ENCODE measurements at regions of chr21 and their contacts with region 1.

Region 1: DNA sequence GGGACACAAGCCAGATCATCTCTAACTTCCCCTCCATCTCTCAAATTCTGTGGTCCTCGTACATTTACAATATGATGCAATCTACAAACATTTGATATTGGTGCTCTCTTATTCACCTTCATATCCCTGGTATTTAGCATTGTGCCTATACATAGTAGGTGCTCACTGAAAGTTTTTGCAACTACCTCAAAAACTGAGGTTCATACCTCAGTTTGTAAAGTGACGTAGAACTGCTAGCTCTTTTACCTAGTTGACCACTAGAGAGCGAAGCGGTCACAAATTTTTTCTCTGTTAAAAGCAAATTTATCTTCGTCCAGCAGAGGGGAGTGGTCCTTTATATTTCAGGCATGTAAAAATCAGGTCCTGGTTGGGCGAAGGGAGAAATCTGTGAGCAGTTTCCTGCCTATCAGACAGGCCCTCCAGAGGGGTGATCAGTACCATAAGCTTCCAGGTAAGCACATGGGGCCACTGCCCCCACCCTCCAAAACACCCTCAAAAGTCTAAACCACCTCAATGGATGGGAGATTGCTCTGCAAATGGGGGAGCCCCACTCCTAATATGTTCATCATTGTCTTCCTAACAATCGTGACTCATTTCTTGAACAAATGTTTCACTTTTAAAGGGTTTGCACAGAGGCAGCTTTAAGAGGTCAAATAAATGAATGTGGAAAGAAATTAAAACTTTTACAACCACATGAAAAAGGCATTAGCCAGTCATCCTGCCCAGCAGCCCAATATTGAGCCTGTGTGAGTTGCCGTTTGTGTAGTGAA is 10.6 kb upstream of the HLCS start:
- DNase-seq: peak; percentile 3 to 62 (median 35)
- H3K4me3 ChIP-seq: no peak overlapping the region
- H3K4me3 Mint-ChIP-seq: peak overlapping the region in 4 of 7 donors; percentile 1 to 63 (median 38)
- H3K27ac ChIP-seq: no peak overlapping the region
- H3K27ac Mint-ChIP-seq: peak overlapping the region in 4 of 8 donors; percentile 71 to 86 (median 78)
- H3K4me1 ChIP-seq: no peaks in the 10 kb centered on the region
- H3K4me1 Mint-ChIP-seq: peaks cover 15 to 24% (median 20%) of the 10 kb centered on the region in 3 donors
- H3K27me3 ChIP-seq: no peaks in the 10 kb centered on the region
- H3K27me3 Mint-ChIP-seq: no peaks in the 10 kb centered on the region

Region 2: DNA sequence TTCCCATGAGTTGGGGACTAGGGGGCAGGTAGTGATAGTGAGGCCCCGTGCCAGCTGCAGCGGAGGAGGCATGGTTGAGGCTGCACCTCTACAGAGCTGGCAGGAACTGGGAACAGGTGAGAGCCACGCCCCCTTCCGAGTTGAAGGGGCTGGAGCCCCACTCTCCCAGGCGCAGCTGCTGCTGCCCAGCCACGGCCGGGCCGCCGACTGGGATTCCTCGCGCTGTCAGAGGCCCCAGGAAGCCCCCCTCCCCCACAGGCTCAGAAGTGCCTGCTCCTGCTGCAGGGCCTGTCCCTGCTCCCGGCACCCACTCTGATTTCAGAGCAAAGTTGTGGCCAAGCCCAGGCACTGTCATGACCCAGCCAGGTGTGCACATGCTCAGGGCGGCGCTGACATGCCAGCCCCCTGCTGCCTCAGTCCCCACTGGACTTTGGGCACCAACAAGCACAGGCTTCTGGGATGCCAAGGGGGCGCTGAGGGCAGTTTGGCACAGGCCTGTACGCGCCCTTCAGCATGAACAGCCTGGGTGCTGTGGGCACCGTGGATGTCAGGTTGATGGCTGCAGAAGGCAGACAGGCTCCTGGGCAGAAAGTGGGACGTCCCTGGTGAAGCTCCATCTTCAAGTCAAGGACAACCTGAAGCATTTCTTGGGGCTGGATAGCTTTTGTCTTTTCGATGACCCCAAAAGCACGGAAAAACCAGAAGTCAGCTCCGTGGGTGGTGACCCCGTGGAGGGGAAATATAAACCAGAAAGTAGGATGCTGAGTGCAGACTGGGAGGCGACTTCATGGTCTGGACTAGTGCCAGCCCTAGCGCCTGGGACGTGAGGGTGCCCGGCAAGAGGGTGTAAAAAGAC is 156.7 kb before region 1 on chr21:
- CTCF ChIA-PET with region 1: no interaction called
- POLR2A ChIA-PET with region 1: no interaction called
- DNase-seq: no peak
- H3K4me3 ChIP-seq: no peak overlapping the region
- H3K4me3 Mint-ChIP-seq: no peak overlapping the region
- H3K27ac ChIP-seq: no peak overlapping the region
- H3K27ac Mint-ChIP-seq: peak overlapping the region in 1 of 8 donors; percentile 47
- H3K4me1 ChIP-seq: no peaks in the 10 kb centered on the region
- H3K4me1 Mint-ChIP-seq: no peaks in the 10 kb centered on the region
- H3K27me3 ChIP-seq: no peaks in the 10 kb centered on the region
- H3K27me3 Mint-ChIP-seq: no peaks in the 10 kb centered on the region

Region 3: GRCh38 chr21:36948686-36949085 is 28.4 kb before region 1 on chr21:
- CTCF ChIA-PET with region 1: no interaction called
- POLR2A ChIA-PET with region 1: no interaction called
- DNase-seq: no peak
- H3K4me3 ChIP-seq: no peak overlapping the region
- H3K4me3 Mint-ChIP-seq: no peak overlapping the region
- H3K27ac ChIP-seq: no peak overlapping the region
- H3K27ac Mint-ChIP-seq: no peak overlapping the region
- H3K4me1 ChIP-seq: no peaks in the 10 kb centered on the region
- H3K4me1 Mint-ChIP-seq: no peaks in the 10 kb centered on the region
- H3K27me3 ChIP-seq: no peaks in the 10 kb centered on the region
- H3K27me3 Mint-ChIP-seq: no peaks in the 10 kb centered on the region

Region 4: DNA sequence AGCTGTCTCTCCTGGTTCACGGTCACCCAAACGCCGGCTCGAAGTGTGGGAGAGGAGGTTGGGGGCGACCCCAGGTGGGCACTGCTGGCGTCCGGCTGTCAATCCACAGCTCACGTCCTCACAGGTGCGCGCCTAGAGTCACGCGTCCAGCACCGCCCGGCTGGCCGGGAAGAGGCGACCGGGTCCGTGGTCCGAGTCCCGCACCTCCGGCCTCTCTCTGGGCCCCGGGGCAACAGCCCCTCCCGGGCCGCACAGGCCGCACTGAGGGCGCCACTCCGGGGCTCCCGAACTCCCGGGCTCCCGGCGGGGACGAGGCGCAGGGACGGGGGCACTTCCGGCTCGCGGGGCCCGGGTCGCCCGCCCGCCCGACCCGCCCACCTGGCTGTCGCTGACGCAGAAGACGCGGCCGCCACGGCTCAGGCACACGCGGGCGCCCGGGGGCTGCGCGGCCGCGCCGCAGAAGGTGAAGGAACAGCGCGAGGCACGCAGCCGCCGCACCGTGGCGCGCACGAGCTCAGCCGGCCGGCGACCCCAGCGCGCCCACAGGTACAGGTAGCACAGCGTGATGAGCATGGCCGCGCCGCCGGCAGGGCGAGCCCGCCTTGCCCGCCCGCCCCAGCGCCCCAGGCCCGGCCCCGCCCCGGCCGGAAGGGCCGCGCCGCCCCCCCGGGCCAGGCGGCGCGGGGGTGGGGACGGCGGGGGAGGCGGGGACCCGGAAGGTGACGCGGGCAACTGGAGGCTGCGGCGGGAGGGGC is 10.8 kb before region 1 on chr21 and contains the start of gene HLCS:
- CTCF ChIA-PET with region 1: interaction called, 13 read pairs
- POLR2A ChIA-PET with region 1: interaction called, 4 read pairs
- DNase-seq: peak; percentile 62 to 81 (median 75)
- H3K4me3 ChIP-seq: peak within 1 kb of the TSS; percentile 63
- H3K4me3 Mint-ChIP-seq: peak within 1 kb of the TSS; percentile 84 to 98 (median 88)
- H3K27ac ChIP-seq: peak within 1 kb of the TSS; percentile 76
- H3K27ac Mint-ChIP-seq: peak within 1 kb of the TSS; percentile 82 to 95 (median 92)
- H3K4me1 ChIP-seq: peaks cover 7% of the 10 kb centered on the region
- H3K4me1 Mint-ChIP-seq: peaks cover 13 to 22% (median 22%) of the 10 kb centered on the region in 3 donors
- H3K27me3 ChIP-seq: no peaks in the 10 kb centered on the region
- H3K27me3 Mint-ChIP-seq: no peaks in the 10 kb centered on the region
- total RNA-seq, gene HLCS: 13.4 to 14.7 TPM

Region 5: DNA sequence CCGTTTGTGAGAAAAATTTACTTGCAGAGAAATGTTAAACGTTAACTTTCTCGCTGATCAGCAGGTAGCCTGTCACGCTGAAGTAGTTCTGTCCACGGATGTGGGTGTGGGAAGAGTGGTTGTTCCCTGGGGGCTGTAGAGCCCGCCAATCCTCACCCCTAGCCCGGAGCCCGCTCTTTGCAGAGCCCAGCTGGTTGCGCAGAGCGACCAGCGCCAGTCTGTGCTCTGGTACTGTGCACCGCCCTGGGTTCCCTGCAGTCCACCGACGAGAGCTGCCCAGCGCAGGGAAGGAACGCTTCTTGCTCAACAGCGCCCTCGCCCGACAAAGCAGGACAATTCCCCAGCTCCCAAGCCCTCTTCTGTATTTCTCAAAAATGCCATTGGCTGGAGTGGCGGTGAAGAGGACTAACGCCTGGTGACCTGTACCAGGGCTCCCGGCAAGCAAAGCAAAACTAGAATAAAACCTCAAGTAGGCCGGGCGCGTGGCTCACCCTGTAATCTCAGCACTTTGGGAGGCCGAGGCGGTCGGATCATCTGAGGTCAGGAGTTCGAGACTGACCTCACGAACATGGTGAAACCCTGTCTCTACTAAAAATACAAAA is 32.8 kb after region 1 on chr21:
- CTCF ChIA-PET with region 1: interaction called, 10 read pairs
- POLR2A ChIA-PET with region 1: no interaction called
- DNase-seq: peak; percentile 64 to 82 (median 65)
- H3K4me3 ChIP-seq: no peak overlapping the region
- H3K4me3 Mint-ChIP-seq: peak overlapping the region; percentile 55 to 87 (median 66)
- H3K27ac ChIP-seq: no peak overlapping the region
- H3K27ac Mint-ChIP-seq: no peak overlapping the region
- H3K4me1 ChIP-seq: peaks cover 6% of the 10 kb centered on the region
- H3K4me1 Mint-ChIP-seq: peaks cover 8 to 13% (median 13%) of the 10 kb centered on the region in 3 donors
- H3K27me3 ChIP-seq: peaks cover 3% of the 10 kb centered on the region
- H3K27me3 Mint-ChIP-seq: peaks cover 25 to 44% of the 10 kb centered on the region in 2 donors